ENCODE measurements at regions of chr10 and their contacts with region 1.

Region 1: GRCh38 chr10:109883859-109884771 is 39.2 kb downstream of the XPNPEP1 start:
- DNase-seq: peak; percentile 72
- ATAC-seq: peak; percentile 79 to 83

Region 2: DNA sequence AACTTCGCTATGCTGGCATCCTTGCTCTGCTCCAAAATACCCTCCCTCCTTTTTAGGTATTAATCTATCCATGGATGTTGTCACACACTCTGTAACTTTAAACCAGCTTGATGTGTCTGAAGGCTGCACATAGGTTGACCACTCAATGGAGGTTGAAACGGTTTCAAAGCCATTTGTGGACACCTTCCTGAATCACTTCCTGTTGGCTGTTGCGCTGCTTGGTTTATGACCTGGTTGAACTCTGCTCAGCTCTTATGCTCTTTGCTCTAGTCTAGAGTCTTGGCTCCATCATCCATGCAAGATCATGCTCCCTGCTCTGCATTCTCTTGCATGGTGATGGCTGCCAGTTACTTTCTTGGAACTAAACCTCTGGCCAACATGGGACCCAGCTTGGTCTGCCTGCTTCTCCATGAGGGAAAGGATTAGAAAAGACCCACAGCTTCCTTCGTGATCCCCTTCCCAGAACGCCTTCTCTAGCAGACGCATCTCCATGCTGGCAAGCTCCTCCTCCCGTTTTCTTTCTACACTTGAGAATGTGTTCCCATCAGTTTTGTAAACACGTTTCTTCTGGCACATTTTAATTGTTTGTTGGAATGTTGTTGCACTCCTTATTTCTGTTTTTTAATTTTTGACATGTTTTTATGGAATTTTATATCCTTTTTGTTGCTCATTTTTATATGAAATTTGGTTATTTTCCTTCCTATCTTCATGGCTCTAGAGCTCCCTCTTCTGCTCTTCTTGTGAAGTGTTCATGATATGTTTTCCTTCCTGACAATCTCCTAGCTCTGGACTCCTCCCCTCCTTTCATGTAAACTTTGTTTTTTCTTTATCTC is 110.6 kb before region 1 on chr10:
- intact Hi-C with region 1: no loop called
- DNase-seq: no peak
- ATAC-seq: peak in 1 of 2 donors; percentile 34

Region 3: DNA sequence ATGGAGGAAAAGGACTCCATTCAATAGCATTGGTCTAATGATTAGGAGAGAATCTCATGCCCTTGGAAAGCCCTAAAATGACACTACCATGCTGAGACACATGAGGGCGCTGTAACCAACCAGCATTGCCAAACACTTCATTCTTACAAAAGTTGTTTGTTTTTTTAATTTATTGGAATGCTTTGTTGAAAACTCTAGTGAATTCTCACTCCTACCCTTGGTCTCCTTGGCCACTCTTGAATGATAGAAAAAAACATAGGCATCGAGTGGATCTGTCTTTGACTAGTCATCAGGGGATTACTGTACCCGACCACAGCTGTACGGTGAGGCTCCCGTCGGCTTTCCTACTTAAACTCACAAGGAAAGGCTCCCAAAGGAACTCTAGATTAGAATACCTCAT is 94.4 kb after region 1 on chr10:
- intact Hi-C with region 1: loop called in 1 of 2 experiments (anchors 10 kb)
- DNase-seq: peak; percentile 26
- ATAC-seq: peak; percentile 28 to 36

Region 4: GRCh38 chr10:110029450-110029849 is 145.3 kb after region 1 on chr10:
- intact Hi-C with region 1: no loop called
- DNase-seq: no peak
- ATAC-seq: no peak

Region 5: GRCh38 chr10:110273474-110273873 is 389.4 kb after region 1 on chr10:
- intact Hi-C with region 1: loop called in 1 of 2 experiments (anchors 5 kb)
- DNase-seq: peak; percentile 78
- ATAC-seq: peak; percentile 60 to 68